Transverse colon (tissue), 4 donors: ENCODE measurements at regions of chr20 and their contacts with region 1.

Region 1: DNA sequence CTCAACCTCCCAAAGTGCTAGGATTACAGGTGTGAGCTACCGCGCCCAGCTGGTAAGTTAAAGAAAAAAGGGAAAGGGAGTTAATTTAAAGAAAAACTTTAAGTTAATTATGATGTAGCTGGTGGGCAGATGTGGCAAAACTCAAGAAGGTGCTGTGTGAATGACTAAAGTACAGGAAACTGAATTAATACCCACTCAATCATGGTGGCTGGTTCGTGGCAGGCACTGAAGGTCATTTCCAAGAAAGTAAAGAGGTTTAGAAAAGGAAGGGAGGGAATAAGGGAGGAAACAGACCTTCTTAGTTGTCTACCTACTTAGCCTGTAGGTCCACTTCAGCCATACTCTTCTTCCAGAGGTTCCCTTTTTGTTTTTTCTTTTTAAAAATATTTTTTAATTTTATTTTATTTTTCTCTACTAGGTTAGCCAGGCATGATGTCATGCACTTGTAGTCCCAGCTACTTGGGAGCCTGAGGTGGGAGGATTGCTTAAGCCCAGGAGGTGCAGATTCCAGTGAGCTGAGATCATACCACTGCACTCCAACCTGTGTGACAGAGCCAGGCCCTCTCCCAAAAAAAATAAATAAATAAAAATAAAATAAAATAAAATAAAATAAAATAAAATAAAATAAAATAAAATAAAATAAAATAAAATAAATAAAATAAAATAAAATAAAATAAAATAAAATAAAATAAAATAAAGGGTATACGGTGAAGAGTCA is 11.9 kb upstream of the TGM3 start:
- DNase-seq: no peak
- H3K4me3 ChIP-seq: no peak overlapping the region
- H3K27ac ChIP-seq: no peak overlapping the region
- H3K4me1 ChIP-seq: no peaks in the 10 kb centered on the region
- H3K27me3 ChIP-seq: no peaks in the 10 kb centered on the region
- CTCF ChIP-seq: no peak
- EP300 ChIP-seq: no peak
- POLR2A ChIP-seq: no peak

Region 2: DNA sequence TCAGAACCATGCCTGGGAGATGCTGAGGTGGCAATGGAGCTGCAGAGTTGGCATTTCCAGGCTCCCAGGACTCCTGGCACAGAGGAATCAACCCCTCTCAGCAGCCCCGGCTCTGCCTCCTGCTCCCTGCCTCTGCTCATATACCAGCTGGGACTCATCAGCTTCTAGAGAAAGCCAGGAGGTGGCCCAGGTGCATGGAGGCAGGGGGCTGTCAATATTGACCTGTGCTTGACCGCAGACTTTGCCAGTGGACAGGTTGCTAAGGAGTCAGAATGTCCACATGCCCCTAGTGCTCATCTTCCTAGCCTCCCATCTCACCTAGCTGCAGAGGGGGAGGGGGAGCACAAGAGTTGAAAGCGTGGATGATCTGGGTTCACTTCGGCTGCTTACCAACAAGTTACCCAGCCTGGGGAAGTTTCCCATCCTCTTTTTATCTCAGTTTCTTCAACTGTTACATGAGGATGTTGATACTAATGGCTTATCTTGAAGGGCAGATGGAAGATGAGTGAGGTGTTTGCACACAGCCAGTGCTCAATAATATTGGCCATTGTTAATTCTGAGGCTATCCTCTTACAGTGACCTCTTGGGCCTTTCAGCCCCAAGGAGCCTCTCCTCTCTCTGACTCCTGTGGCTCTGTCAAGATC is 1599.1 kb before region 1 on chr20:
- in situ Hi-C with region 1: no loop called
- intact Hi-C with region 1: loop called (anchors 5 kb)
- DNase-seq: no peak
- H3K4me3 ChIP-seq: no peak overlapping the region
- H3K27ac ChIP-seq: no peak overlapping the region
- H3K4me1 ChIP-seq: no peaks in the 10 kb centered on the region
- H3K27me3 ChIP-seq: peaks cover 74% of the 10 kb centered on the region
- CTCF ChIP-seq: no peak
- EP300 ChIP-seq: no peak
- POLR2A ChIP-seq: no peak

Region 3: GRCh38 chr20:2626853-2627541 is 343.1 kb after region 1 on chr20:
- in situ Hi-C with region 1: no loop called
- intact Hi-C with region 1: no loop called
- DNase-seq: peak; percentile 74
- H3K4me3 ChIP-seq: no peak overlapping the region
- H3K27ac ChIP-seq: peak overlapping the region in 1 of 4 donors; percentile 35
- H3K4me1 ChIP-seq: no peaks in the 10 kb centered on the region
- H3K27me3 ChIP-seq: peaks cover 3% of the 10 kb centered on the region
- CTCF ChIP-seq: peak in 1 of 5 experiments; percentile 19
- EP300 ChIP-seq: no peak
- POLR2A ChIP-seq: no peak